ENCODE measurements at regions of chr7 and their contacts with region 1.

Region 1: GRCh38 chr7:73557108-73557396 is 438 bp downstream of the BCL7B start:
- DNase-seq: peak; percentile 95 to 97
- ATAC-seq: peak; percentile 90 to 93 (median 92)
- H3K4me3 ChIP-seq: peak overlapping the region; percentile 80
- H3K27ac ChIP-seq: peak overlapping the region; percentile 98
- H3K4me1 ChIP-seq: peaks cover 39% of the 10 kb centered on the region
- H3K27me3 ChIP-seq: no peaks in the 10 kb centered on the region
- CTCF ChIP-seq: no peak

Region 2: GRCh38 chr7:73522105-73522872 is 34.8 kb before region 1 on chr7 and contains the start of gene BAZ1B:
- intact Hi-C with region 1: loop called (anchors 2 to 5 kb)
- DNase-seq: peak; percentile 99
- ATAC-seq: peak; percentile 98 to 99 (median 98)
- H3K4me3 ChIP-seq: peak within 1 kb of the TSS; percentile 81
- H3K27ac ChIP-seq: peak within 1 kb of the TSS; percentile 96
- H3K4me1 ChIP-seq: peaks cover 30% of the 10 kb centered on the region
- H3K27me3 ChIP-seq: no peaks in the 10 kb centered on the region
- CTCF ChIP-seq: no peak
- total RNA-seq, gene BAZ1B: 39.5 to 49.8 (median 42.3) TPM

Region 3: DNA sequence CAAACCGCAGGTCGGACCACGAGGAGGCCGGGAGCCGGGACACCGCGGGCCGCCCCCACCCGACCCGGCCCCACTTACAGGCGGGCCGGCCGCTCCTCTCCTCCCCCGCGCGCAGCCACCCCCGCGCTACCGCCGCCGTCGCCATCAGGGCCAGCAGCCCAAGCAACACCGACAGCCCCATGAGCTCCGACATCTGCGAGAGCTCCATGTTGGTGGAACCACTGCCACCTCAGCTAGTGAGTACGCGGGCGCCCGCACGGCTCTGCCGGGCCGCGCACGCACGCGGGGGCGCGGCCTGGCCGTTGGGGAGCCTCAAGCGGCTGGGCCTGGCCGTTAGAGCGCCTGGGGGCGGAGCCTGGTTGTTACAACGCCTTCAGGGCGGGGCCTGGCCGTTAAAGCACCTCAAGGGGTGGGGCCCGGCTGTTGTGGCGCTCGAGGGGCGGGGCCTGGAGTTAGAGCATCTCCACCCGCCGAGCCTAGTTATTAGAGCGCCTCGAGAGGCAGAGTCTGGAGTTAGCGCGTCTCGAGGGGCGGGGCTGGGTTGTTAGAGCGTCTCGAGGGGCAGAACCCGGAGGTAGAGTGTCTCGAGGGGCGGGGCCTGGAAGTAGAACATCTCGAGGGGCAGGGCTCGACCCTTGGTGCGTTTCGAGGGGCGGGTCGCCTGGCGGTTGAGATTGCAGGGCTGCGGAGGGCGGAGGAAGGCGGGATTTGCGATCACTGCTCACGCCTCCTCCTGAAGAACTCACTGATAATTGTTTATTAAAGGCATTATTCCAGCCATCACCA is 21.5 kb after region 1 on chr7 and contains the start of gene TBL2:
- intact Hi-C with region 1: loop called in 1 of 2 experiments (anchors 1 kb)
- DNase-seq: peak; percentile 98 to 100
- ATAC-seq: peak; percentile 97 to 98 (median 97)
- H3K4me3 ChIP-seq: peak within 1 kb of the TSS; percentile 99
- H3K27ac ChIP-seq: peak within 1 kb of the TSS; percentile 90
- H3K4me1 ChIP-seq: peaks cover 10% of the 10 kb centered on the region
- H3K27me3 ChIP-seq: peaks cover 0 to 3% (median 2%) of the 10 kb centered on the region in 3 donors
- CTCF ChIP-seq: peak; percentile 11
- total RNA-seq, gene TBL2: 10.3 to 16.1 (median 11.8) TPM

Region 4: GRCh38 chr7:73593207-73594045 is 36.4 kb after region 1 on chr7:
- intact Hi-C with region 1: no loop called
- DNase-seq: no peak
- ATAC-seq: peak in 3 of 4 donors; percentile 11 to 17 (median 16)
- H3K4me3 ChIP-seq: no peak overlapping the region
- H3K27ac ChIP-seq: no peak overlapping the region
- H3K4me1 ChIP-seq: no peaks in the 10 kb centered on the region
- H3K27me3 ChIP-seq: peaks cover 0 to 3% (median 0%) of the 10 kb centered on the region in 3 donors
- CTCF ChIP-seq: no peak

Region 5: DNA sequence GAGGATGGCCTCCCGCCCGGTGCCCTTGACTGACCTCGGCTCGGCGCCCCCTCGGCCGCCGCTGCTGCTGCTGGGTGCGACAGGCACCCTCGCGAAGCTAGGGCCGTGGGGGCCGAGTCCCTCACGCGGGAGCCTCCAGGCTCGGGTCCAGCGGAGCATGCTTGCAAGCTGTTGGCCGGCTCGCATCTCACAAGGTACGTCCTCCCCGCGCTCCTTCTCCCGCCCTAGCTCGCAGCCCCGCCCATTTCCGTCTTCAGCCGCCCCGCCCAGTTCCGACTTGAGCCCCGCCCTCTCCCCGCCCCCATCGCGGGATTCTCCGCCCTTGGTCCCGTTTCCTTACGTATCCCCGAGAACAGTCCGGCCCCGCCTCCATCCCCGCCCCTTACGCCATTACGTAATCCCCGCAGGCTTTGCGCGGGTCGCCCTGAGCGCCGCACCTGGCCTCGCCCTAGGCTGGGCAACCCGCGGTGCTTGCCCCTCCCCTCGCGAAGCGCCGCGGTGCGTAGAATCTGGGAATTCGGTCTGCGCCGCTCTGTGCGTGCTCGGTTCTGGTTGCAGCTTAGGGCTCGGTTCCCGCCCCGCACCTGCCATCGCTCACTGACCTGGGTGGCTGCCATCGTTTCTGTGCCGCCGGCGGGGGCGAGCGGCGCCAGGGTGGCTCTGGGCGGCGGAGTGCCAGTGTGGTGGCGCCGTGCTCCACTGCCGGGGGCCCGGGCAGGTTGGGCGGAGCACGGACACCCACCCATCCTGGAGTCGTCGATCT is 181.7 kb after region 1 on chr7 and contains the start of gene ABHD11:
- intact Hi-C with region 1: no loop called
- DNase-seq: peak; percentile 96 to 99
- ATAC-seq: peak; percentile 95 to 97 (median 96)
- H3K4me3 ChIP-seq: peak within 1 kb of the TSS; percentile 91
- H3K27ac ChIP-seq: peak within 1 kb of the TSS; percentile 83
- H3K4me1 ChIP-seq: no peaks in the 10 kb centered on the region
- H3K27me3 ChIP-seq: no peaks in the 10 kb centered on the region
- CTCF ChIP-seq: no peak
- total RNA-seq, gene ABHD11: 6.8 to 16.9 (median 11.5) TPM

Measured in psoas muscle (tissue), 8 donors.